Dorsolateral prefrontal cortex (tissue), 120 donors: ENCODE measurements at regions of chrX and their contacts with region 1.

Region 1: GRCh38 chrX:72018277-72019112 is 107.8 kb downstream of the NHSL2 start:
- DNase-seq: peak; percentile 59 to 87 (median 70)
- H3K4me3 ChIP-seq: peak overlapping the region in 40 of 59 donors; percentile 5 to 57 (median 30)
- H3K27ac ChIP-seq: peak overlapping the region in 40 of 59 donors; percentile 13 to 81 (median 62)
- H3K27me3 ChIP-seq: peaks cover 0 to 82% (median 31%) of the 10 kb centered on the region in 45 donors
- CTCF ChIP-seq: peak; percentile 31 to 90 (median 73)

Region 2: DNA sequence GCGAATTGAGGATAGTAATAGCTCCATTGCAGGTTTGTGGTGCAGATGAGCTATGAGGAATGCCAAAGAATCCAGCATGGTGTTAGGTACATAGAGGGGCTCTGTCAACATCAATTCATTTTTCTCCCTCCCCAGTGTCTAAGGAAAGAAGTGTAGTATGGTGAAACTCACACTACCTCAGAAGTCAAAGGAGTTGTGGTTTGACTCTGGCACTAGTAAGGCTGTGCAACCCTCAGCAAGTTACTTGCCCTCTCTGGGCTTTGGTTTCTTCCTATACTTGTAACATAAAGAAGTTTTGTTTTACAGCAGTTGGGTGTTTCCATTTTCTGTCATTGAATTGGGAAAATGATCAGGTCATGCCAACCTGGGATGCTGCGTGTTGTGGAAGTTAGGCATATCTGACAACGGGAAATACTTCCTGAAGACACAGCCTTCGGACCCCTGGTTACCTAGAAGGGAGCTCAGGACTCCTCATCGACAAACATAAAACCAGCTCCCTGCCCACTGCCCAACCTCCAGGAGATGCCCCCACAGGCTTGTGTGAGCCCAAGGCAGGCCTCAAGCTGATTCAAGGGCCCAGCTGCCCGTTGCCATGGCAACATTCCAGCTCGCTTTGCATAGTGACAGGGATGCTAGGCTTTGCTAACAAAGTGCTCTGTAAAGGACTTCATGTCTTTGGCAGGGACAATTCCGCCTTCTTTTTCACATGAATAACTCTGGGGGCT is 41.9 kb after region 1 on chrX:
- intact Hi-C with region 1: loop called in 1 of 2 experiments (anchors 10 kb)
- DNase-seq: peak; percentile 44 to 89 (median 76)
- H3K4me3 ChIP-seq: no peak overlapping the region
- H3K27ac ChIP-seq: peak overlapping the region in 17 of 59 donors; percentile 4 to 56 (median 32)
- H3K27me3 ChIP-seq: peaks cover 0 to 91% (median 20%) of the 10 kb centered on the region in 45 donors
- CTCF ChIP-seq: no peak

Region 3: DNA sequence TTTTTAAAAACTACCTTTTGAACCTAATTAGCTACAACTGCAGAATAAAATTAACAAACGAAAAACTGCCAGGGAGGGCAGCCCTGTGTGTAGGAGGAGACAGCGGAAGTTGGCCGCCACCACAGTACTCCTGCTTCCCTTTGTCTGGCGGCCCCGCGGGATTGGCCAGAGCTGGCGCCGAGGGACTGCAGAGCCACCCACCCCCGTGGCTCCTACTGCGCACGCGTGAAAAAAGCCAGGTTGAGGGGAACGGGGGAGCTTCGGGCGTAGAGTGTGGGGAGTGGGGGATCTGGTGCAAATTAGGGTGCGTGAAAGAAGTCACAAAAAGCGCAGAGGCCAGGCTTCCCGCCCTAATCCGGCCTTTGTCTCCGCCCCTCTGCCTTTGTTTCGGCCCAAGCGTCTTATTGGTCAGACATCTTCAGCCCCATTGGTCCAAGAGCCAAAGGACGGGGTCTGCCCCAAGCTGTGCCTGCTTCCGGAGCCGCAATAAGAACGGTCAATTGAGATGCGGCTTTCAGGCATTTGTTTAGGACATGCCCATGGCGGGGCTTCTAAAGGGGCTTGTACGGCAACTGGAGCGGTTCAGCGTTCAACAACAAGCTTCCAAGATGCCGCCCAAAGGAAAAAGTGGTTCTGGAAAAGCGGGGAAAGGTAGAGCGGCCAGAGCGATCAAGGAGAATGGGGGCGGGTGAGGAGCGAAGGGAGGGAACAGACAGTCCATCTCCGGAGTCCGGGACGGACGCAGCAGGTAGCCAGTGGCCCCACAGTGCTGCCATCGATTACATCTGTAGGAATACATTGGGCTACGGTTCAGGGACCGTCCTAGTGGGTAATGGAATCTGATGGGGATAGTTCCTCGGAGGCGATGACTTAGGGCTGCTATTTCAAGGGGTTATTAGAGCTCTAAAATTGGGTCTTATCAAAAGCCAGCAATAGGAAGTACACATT is 163.0 kb after region 1 on chrX and contains the start of gene PIN4:
- intact Hi-C with region 1: loop called in 1 of 2 experiments (anchors 5 kb)
- DNase-seq: peak; percentile 75 to 96 (median 92)
- H3K4me3 ChIP-seq: peak within 1 kb of the TSS; percentile 42 to 89 (median 74)
- H3K27ac ChIP-seq: peak within 1 kb of the TSS in 58 of 59 donors; percentile 24 to 91 (median 84)
- H3K27me3 ChIP-seq: peaks cover 0 to 33% (median 0%) of the 10 kb centered on the region in 45 donors
- CTCF ChIP-seq: peak in 7 of 56 donors; percentile 6 to 38 (median 10)
- total RNA-seq, gene PIN4: 8.5 to 21.1 (median 13.4) TPM